Posterior vena cava (tissue), 2 donors: ENCODE measurements at regions of chr3 and their contacts with region 1.

Region 1: GRCh38 chr3:32334675-32335074 is 57.0 kb upstream of the CMTM7 start:
- DNase-seq: no peak

Region 2: GRCh38 chr3:32296256-32297204 is 38.1 kb before region 1 on chr3:
- intact Hi-C with region 1: loop called in 1 of 2 experiments (anchors 5 kb)
- DNase-seq: peak; percentile 83